ENCODE measurements at regions of chr2 and their contacts with region 1.

Region 1: DNA sequence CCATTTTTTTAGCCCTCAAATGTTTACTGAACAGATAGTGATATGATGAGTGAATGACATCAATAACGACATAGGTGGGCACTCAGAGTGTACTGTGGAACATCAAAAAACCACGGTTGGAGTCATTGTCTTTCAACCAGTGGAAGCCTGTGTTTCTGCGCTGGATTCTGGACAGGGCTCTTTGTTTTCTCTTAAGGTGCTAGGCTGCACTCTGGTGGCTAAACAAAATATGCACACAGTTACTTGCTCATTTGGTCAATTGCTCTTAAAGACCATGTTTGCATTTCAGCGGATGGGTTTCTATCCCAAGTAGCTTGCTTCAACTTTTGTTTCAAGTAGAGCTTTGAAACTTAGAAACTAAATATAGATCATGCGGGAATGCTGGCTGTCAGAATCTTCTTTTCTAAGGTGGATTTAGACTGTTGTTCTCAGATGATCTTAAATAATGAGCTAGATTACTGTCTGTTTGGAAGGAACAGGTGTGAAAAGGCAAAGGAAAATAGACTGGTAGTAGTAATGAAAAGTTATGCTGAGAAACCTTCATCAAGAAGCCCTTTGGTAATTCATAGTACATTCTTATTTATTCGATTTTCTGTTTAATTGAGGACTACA is 48.5 kb upstream of the LYPD6B start:
- DNase-seq: peak; percentile 40
- ATAC-seq: peak; percentile 81 to 89

Region 2: DNA sequence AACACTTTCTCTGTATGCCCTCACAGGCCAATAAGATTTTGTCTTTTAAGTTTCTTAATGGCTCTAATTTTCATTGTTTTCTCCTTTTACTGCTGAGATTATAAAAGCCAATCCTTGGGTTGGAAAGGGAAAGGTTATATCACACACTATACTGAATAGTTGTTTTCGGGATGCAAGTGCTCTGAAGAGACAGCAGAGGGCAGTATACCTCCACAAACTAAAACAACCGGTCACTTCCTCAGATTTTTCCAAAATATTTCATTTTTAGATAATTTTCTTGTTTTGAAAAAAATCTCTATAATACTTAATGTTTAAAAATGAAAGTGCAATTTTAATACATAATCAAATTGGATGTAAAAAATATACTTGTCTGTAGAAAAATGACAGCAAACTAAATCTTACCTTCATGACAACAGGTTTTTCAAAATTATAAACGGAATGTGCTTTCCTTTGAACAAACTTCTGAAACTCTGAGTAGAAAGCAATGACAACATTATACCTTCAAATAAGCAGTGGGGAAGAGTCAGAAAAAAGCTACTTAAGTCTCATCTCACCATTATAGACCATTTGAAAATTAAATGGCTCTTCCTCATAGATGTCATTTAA is 1052.1 kb before region 1 on chr2:
- intact Hi-C with region 1: loop called (anchors 2 to 10 kb)
- DNase-seq: no peak
- ATAC-seq: peak; percentile 57 to 72

Region 3: DNA sequence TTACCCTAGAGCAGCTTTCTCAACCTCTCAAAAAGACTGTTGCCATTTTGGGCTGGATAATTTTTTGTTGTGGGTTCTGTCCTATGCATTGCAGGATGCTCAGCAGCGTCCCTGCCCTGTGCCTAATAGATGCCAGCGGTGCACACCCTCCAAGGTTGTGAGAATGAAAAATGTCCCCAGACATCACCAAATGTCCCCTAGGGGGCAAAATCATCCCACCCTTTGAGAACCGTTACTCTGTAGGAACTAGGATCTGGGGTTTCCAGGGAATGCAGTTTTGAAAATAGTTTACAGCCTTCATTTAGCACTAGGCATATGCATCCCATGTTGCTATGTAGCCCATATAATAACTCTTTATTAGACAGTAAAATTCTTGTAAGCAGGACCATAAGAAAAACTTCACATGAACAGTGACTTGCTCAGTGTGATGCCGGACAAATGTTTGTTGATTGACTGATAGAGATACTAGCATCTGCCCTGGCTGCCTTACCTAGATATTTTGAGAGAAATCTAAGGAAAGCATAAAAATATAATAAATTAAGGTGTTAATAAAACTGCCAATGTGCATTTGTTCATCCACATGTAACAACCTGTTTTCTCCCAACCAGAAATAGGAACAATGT is 424.6 kb before region 1 on chr2:
- intact Hi-C with region 1: loop called in 1 of 2 experiments (anchors 5 kb)
- DNase-seq: no peak
- ATAC-seq: peak in 1 of 2 donors; percentile 47

Region 4: GRCh38 chr2:148644883-148645538 is 345.0 kb before region 1 on chr2:
- intact Hi-C with region 1: loop called in 1 of 2 experiments (anchors 5 kb)
- DNase-seq: peak; percentile 95
- ATAC-seq: peak; percentile 88 to 91

Region 5: DNA sequence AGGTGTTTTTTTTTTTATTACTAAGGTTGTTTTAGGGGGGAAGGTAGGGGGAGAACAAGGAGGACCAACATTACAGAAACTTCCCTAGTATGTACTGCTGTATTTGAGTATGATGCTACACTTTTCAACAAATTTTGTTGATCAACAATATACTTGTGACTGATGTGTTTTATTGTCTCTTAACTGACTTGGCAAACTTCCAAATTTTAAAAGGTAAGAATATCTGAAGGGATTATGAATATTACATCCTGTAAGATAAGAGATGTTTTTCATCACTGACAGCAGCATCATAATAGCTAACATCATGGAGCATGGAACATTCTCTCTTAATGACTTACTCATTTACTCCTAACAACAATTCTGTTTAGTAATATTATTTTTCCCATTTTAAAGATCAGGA is 200.9 kb before region 1 on chr2:
- intact Hi-C with region 1: no loop called
- DNase-seq: no peak
- ATAC-seq: no peak

Region 6: DNA sequence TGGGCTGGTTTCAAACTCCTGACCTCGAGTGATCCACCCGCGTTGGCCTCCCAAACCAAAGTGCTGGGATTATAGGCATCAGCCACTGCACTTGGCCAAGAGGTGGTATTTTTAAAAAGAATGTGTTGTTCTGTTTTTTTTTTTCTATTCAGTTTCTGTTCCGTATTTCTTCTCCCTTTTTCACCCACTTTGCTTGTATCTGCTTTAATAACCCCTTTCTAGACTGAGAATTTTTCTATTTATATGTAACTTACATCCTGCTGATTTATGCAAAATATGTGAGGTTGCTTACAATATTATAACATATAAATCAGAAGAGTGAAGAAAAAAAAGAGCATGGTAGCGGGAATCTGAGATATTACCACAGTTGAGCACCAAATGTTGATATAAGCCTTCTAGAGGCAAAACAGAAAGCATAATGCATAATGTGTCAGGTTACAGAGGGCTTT is 31.3 kb after region 1 on chr2:
- intact Hi-C with region 1: no loop called
- DNase-seq: no peak
- ATAC-seq: no peak